ENCODE measurements at regions of chr3 and their contacts with region 1.

Region 1: DNA sequence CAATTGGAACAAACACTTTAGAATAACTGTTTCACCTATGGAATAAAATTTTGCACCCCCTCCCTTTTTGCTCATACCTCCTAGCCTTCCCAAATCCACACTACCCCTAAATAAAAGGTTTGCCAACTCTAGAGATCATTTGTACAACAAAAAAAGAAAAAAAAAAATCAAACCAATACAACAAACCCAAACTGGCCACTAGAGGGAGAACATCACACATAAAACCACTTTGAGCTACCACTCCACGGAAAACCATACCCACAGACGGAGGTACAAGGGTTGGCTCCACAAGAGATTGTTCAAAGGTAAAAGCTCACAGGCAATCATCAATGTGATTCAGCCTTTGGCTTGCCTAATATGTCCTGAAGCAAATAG is 47.6 kb downstream of the SETMAR start:
- DNase-seq: no peak
- ATAC-seq: peak; percentile 94
- H3K4me3 ChIP-seq: peak overlapping the region; percentile 35 to 40
- H3K27ac ChIP-seq: peak overlapping the region in 1 of 2 donors; percentile 67
- H3K4me1 ChIP-seq: no peaks in the 10 kb centered on the region
- H3K27me3 ChIP-seq: no peaks in the 10 kb centered on the region

Region 2: DNA sequence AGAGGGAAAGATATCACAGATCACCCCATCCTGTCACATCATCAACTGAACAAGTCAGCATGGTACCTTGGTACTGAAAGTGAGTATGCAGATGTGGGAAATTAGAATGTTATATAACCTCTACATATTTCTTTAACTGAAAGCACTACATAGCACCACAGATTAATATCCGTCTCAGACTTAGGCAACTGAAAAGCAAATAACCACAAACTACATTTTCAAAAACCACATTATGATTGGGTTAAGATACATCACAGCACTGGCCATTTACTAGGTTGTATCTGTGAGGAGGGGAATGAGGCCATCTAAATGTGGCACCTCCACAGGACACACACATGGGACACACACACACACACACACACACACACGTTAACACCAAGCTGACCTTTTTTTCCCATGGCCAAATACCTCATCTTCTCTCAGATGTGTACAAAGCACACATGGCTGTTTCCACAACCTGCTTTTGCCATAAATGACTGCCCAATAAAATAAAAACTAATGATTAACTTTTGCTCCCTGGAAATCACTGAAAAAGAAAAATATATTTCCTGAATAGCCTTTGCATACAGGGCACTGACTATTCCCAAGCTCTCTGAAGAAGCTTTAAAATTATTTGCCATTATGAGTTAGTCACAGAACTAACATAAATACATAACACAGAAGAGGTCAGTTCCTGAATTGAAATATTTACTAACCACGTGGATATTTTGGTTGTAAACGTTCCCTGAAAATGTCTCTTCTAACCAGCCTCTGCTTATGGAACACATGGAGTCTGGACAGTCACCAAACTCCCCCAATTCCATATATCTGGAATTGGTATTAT is 56.2 kb after region 1 on chr3:
- intact Hi-C with region 1: loop called (anchors 5 to 10 kb)
- DNase-seq: no peak
- ATAC-seq: no peak
- H3K4me3 ChIP-seq: no peak overlapping the region
- H3K27ac ChIP-seq: no peak overlapping the region
- H3K4me1 ChIP-seq: peaks cover 2 to 8% of the 10 kb centered on the region in 2 donors
- H3K27me3 ChIP-seq: no peaks in the 10 kb centered on the region

Region 3: GRCh38 chr3:4416961-4417360 is 66.2 kb after region 1 on chr3:
- intact Hi-C with region 1: loop called in 1 of 2 experiments (anchors 2 kb)
- DNase-seq: peak; percentile 92
- ATAC-seq: peak; percentile 86
- H3K4me3 ChIP-seq: no peak overlapping the region
- H3K27ac ChIP-seq: peak overlapping the region in 1 of 2 donors; percentile 64
- H3K4me1 ChIP-seq: peaks cover 0 to 6% of the 10 kb centered on the region in 2 donors
- H3K27me3 ChIP-seq: no peaks in the 10 kb centered on the region

Region 4: DNA sequence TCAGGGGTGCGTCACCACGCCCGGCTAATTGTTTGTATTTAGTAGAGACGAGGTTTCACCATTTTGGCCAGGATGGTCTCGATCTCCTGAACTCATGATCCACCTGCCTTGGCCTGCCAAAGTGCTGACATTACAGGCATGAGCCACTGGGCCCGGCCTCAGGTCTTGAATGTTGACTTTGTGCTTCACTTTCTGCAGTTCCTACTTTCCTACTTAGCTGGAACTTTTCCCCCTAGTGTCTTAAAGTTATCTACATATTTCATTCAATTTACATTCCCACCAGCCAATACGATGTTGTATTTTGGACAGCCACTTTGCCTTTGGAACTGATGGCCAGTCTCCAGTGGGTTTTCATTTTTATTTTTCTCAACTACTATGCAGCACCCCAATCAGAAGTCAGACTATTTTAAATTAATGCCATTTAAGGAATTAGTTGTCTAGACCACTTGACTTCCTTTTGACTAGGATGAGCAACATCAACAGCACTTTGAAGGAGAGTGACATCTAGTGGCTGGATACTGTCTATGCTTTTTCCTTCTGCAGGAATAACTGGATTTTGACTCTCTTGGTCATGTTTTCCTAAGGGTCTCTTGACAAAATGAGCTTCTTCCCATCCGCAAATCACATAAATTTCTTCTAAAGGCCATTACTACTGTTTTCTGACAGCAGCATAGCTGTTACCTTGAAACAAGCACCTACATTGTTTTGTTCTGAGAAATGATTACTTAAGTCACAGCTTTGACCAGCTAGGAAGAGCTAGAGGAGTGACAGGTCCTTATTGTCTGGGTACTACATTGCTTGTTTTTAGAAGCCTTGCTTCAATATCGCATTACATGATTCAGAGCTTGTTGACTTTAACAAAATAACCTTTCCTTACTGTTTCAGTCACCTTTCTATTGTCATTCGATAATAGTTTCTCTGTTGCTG is 282.6 kb after region 1 on chr3:
- intact Hi-C with region 1: loop called (anchors 1 kb)
- DNase-seq: no peak
- ATAC-seq: peak; percentile 87
- H3K4me3 ChIP-seq: no peak overlapping the region
- H3K27ac ChIP-seq: no peak overlapping the region
- H3K4me1 ChIP-seq: peaks cover 0 to 1% of the 10 kb centered on the region in 2 donors
- H3K27me3 ChIP-seq: no peaks in the 10 kb centered on the region

Measured in aorta (tissue), 5 donors.